ENCODE measurements at regions of chr19 and their contacts with region 1.

Region 1: GRCh38 chr19:17390665-17391370 is 3.2 kb downstream of the CCDC194 start:
- DNase-seq: peak; percentile 90 to 93
- ATAC-seq: peak; percentile 99

Region 2: GRCh38 chr19:17260842-17261325 is 129.9 kb before region 1 on chr19:
- intact Hi-C with region 1: no loop called
- DNase-seq: peak; percentile 83 to 89
- ATAC-seq: peak; percentile 98

Region 3: GRCh38 chr19:17334414-17335409 is 56.1 kb before region 1 on chr19 and contains the start of gene ANO8:
- intact Hi-C with region 1: no loop called
- DNase-seq: peak; percentile 97 to 98
- ATAC-seq: peak; percentile 71
- total RNA-seq, gene ANO8: 8.4 to 10.8 TPM

Region 4: DNA sequence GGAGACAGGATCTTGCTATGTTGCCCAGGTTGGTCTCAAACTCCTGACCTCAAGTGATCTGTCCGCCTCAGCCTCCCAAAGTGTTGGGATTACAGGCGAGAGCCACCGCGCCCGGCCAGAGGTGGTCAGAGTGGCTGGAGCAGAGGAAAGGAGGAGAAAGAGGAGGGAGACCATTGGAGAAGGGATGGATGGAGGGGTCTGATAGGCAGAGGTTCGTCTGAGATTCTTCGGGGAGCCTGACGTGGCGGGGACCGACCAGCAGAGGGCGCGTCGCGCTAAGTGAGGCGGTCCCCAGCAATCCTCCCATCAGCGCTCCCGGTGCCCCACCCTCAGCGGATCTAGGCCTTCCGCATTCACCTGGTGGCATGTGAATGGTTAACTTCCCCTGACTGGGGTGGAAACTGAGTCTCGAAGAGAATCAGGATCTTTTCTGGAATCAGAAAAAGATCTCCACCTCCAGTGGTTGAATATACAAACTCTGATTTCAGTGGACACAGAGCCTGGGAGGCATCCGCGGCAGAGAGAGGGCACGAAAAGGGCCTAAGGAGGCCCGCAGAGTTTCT is 44.6 kb before region 1 on chr19:
- intact Hi-C with region 1: loop called in 1 of 2 experiments (anchors 5 kb)
- DNase-seq: peak; percentile 61 to 84
- ATAC-seq: peak; percentile 88

Region 5: DNA sequence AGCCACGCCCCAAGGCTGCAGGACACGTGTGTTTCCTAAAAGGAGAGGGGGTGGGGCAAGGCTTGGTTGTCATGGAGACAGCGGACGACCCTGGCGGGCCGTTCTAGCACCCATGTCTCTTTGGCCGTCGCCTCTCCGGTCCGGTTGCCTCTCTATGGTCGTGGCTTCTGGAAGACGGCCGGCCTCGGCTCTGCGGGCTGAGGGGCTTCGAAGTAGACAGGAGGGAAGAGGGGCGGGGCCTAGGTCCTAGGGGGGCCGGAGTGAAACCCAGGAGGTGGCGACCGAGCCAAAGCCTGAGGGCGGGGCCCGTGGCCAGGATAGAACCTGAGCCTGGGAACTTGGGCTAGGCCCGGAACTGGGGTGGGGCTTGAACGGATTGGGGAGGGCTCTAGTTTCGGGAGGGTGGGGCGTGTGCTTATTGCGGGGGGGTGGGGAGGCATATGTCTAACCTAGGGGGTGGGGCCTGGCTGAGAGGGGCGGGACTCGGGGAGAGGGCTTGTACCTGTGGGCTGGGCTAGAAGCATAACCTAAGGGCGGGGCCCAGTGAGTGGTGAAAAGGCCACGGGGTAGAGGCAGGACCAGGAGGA is 78.8 kb after region 1 on chr19:
- intact Hi-C with region 1: loop called in 1 of 2 experiments (anchors 10 kb)
- DNase-seq: peak; percentile 98
- ATAC-seq: peak; percentile 82

Measured in left colon (tissue), 2 donors.